ENCODE measurements at regions of chr2 and their contacts with region 1.

Region 1: GRCh38 chr2:69773206-69773767 is 31.4 kb downstream of the ANXA4 start:
- DNase-seq: peak; percentile 34
- H3K4me3 Mint-ChIP-seq: no peak overlapping the region
- H3K27ac Mint-ChIP-seq: no peak overlapping the region
- H3K4me1 Mint-ChIP-seq: peaks cover 44% of the 10 kb centered on the region
- H3K27me3 Mint-ChIP-seq: no peaks in the 10 kb centered on the region

Region 2: DNA sequence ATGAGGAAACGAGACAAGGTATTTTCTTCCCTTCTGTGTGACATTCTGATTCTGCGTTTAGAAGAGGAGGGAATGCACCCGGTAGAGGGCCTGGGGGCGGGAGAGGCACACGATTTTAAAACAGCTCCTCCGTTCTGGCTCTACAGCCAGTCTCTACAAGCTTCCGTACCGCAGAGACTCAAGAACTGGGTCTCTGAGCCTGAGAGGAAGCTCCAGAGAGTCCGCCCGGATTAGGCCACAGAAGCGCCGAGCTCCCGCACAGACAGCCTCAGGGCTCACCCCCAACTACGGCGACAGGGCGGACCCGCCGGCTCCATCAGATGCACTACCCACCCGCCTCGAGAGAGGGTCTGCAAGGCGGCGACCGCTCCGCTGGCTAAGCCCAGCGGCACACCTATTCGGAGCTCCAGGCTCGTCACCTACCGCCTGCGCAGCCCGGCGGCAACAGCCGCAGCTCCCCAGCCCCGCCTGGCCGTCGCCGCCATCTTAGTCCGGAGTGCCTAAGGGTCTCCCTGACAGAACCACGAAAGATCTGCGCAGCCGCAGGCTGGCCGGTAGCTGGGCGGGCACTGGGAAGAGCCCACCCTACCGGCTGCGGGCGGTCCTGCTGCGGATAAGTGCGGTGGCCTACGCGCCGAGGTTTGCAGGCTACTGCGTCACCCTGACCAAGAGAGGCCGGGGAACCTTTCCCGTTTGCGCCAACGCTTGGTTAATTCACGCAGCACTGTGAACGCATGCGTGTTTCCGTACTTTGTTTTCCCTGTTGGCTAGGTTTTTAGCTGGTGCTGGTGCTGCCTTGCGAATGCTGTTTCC is 336.1 kb before region 1 on chr2 and contains the start of gene NFU1:
- CTCF ChIA-PET with region 1: no interaction called
- intact Hi-C with region 1: no loop called
- DNase-seq: peak; percentile 90
- H3K4me3 Mint-ChIP-seq: peak within 1 kb of the TSS; percentile 95
- H3K27ac Mint-ChIP-seq: peak within 1 kb of the TSS; percentile 94
- H3K4me1 Mint-ChIP-seq: peaks cover 29% of the 10 kb centered on the region
- H3K27me3 Mint-ChIP-seq: no peaks in the 10 kb centered on the region
- total RNA-seq, gene NFU1: 35.7 to 39.3 TPM

Region 3: DNA sequence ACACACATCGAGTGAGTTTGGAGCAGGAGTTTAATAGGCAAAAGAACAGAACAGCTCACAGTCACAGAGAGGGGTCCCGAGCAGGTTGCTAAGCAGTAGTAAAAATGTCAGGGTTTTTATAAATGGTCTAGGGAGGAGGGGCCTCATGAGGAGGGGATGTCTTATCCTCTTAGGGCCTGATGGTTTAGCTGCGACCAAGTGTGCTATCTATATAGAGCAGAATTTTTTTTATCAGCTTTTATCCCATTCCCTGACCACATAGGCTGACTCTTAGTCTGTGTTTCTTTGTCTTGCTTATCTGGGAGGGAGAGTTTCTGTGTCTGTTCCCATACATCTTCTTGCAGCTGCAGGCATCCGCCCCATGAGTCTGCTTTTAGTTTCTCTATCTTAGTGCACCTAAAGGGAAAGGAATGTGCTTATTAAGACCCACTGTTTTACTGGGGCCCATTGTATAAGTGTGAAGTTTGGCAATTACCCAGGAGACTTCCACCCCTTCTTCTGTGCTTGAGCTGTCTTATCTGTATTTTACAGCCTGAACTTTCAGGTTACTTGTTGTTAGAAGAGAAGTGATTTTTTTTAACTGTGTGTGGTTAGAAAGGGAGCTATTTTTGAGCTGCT is 25.7 kb after region 1 on chr2:
- CTCF ChIA-PET with region 1: no interaction called
- intact Hi-C with region 1: loop called (anchors 2 kb)
- DNase-seq: peak; percentile 25
- H3K4me3 Mint-ChIP-seq: no peak overlapping the region
- H3K27ac Mint-ChIP-seq: no peak overlapping the region
- H3K4me1 Mint-ChIP-seq: peaks cover 14% of the 10 kb centered on the region
- H3K27me3 Mint-ChIP-seq: no peaks in the 10 kb centered on the region

Region 4: DNA sequence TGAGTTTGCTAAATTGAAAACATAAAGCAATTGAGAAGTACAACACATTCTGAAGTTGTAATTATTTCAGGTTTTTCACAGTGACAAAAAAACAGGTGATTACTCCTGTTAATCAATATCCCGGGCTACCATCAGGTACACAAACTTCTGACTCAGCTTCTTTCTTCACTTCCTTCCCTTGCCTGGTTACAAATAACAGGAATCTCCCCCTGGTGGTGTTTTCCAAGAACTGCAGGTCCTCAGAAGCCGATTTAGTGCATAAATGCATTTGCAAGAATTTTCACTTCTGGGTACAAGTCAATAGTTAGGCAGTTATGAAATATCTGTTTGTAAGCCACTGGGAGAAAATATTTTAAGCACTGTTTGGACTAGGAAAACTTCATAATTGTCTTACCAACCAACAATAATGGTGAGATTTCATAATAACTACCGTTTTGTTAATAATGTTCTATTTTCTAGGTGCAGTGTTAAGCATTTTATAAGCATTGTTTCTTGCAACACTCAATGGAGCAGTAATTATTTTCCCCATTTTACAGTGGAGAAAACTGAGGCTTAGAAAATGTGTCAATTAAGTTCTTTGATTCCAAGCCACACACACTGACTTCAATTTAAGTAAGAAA is 43.7 kb after region 1 on chr2:
- CTCF ChIA-PET with region 1: interaction called, 4 read pairs
- intact Hi-C with region 1: loop called (anchors 2 kb)
- DNase-seq: peak; percentile 88
- H3K4me3 Mint-ChIP-seq: no peak overlapping the region
- H3K27ac Mint-ChIP-seq: no peak overlapping the region
- H3K4me1 Mint-ChIP-seq: peaks cover 2% of the 10 kb centered on the region
- H3K27me3 Mint-ChIP-seq: no peaks in the 10 kb centered on the region